Caco-2 (cell line): ENCODE measurements at regions of chr1 and their contacts with region 1.

Region 1: DNA sequence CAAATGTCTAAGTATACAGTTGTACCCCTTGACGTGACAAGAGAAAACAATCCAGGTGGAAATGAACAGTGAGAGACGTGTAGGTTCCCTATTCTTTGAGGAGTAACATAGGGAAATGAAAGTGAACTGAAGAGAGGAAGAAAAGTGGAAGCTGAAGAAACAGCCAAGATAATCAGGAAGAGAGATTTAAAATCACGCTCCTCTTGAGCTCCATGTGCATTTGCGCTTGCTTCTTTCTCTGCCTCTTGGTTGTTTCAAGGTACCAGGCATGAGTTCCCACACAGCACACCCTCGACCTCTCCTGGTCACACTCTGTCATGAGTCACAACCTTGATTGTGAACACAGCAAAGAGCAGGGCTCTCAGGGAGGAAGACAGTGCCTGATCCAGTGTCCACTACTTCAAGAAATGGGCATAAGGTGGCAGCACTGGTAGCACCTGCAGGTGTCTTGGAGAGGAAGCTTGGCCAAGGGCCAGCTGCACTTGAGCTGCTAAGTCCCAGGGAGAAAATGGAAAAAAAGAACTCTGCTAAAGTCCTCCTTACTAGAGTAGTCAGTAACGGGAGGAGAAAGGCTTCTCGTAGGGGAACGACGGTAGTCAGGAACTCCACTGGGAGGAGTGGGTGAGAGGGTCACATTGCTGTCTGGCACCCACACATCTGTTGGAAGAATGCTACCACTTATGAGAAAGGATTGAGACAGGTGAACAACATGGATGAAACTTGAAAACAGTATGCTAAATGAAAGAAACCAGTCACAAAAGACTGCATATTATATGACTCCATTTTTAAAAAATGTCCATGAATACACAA is 18.3 kb upstream of the ARID1A start:
- DNase-seq: peak; percentile 79 to 84
- H3K4me3 ChIP-seq: no peak overlapping the region
- H3K4me3 Mint-ChIP-seq: peak overlapping the region; percentile 26
- H3K27ac Mint-ChIP-seq: no peak overlapping the region
- H3K4me1 ChIP-seq: no peaks in the 10 kb centered on the region
- H3K4me1 Mint-ChIP-seq: peaks cover 11% of the 10 kb centered on the region
- H3K27me3 ChIP-seq: no peaks in the 10 kb centered on the region
- H3K27me3 Mint-ChIP-seq: no peaks in the 10 kb centered on the region
- CTCF ChIP-seq: peak in 1 of 2 experiments; percentile 75

Region 2: GRCh38 chr1:26602378-26602959 is 75.0 kb before region 1 on chr1:
- CTCF ChIA-PET with region 1: interaction called, 11 read pairs
- POLR2A ChIA-PET with region 1: no interaction called
- intact Hi-C with region 1: loop called (anchors 1 kb)
- DNase-seq: peak; percentile 46 to 63
- H3K4me3 ChIP-seq: no peak overlapping the region
- H3K4me3 Mint-ChIP-seq: no peak overlapping the region
- H3K27ac Mint-ChIP-seq: no peak overlapping the region
- H3K4me1 ChIP-seq: no peaks in the 10 kb centered on the region
- H3K4me1 Mint-ChIP-seq: no peaks in the 10 kb centered on the region
- H3K27me3 ChIP-seq: no peaks in the 10 kb centered on the region
- H3K27me3 Mint-ChIP-seq: no peaks in the 10 kb centered on the region
- CTCF ChIP-seq: peak; percentile 55 to 60

Region 3: GRCh38 chr1:26787706-26788514 is 110.4 kb after region 1 on chr1 and contains the start of gene PIGV:
- CTCF ChIA-PET with region 1: interaction called, 27 read pairs
- POLR2A ChIA-PET with region 1: interaction called, 3 read pairs
- intact Hi-C with region 1: loop called (anchors 1 kb)
- DNase-seq: peak; percentile 82 to 89
- H3K4me3 ChIP-seq: peak within 1 kb of the TSS; percentile 77
- H3K4me3 Mint-ChIP-seq: peak within 1 kb of the TSS; percentile 87
- H3K27ac Mint-ChIP-seq: peak within 1 kb of the TSS; percentile 90
- H3K4me1 ChIP-seq: peaks cover 44% of the 10 kb centered on the region
- H3K4me1 Mint-ChIP-seq: peaks cover 30% of the 10 kb centered on the region
- H3K27me3 ChIP-seq: no peaks in the 10 kb centered on the region
- H3K27me3 Mint-ChIP-seq: no peaks in the 10 kb centered on the region
- CTCF ChIP-seq: no peak
- total RNA-seq, gene PIGV: 10.0 and 12.3 TPM in 2 replicates

Region 4: DNA sequence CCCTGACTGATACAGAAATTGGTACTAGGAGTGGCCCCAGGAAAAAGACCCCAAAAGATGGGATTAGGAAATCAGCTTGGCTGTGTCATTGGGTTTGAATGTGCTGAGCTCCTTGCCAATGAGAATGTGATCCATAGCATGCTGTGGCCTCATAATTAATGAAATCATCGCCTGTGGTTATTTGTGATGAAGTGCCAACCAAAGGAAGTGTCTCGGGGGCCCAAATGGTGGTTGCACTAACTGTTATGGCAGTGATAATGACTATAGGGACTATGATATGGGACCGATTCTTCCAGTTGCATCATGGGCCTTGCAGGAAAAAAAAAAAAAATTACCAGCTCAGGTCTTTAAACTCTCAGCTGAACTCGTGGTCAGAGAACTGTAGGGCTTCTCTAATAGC is 133.5 kb after region 1 on chr1:
- CTCF ChIA-PET with region 1: interaction called, 10 read pairs
- POLR2A ChIA-PET with region 1: no interaction called
- intact Hi-C with region 1: no loop called
- DNase-seq: no peak
- H3K4me3 ChIP-seq: no peak overlapping the region
- H3K4me3 Mint-ChIP-seq: no peak overlapping the region
- H3K27ac Mint-ChIP-seq: no peak overlapping the region
- H3K4me1 ChIP-seq: no peaks in the 10 kb centered on the region
- H3K4me1 Mint-ChIP-seq: no peaks in the 10 kb centered on the region
- H3K27me3 ChIP-seq: no peaks in the 10 kb centered on the region
- H3K27me3 Mint-ChIP-seq: no peaks in the 10 kb centered on the region
- CTCF ChIP-seq: no peak